Posterior cingulate gyrus (tissue), 11 donors: ENCODE measurements at regions of chr10 and their contacts with region 1.

Region 1: GRCh38 chr10:73848821-73849489 is 25.4 kb downstream of the CAMK2G start:
- DNase-seq: peak; percentile 68 to 97 (median 87)

Region 2: GRCh38 chr10:73879296-73880173 is 30.6 kb after region 1 on chr10:
- intact Hi-C with region 1: loop called (anchors 1 kb)
- DNase-seq: peak; percentile 55 to 97 (median 73)

Region 3: GRCh38 chr10:73931767-73932619 is 83.0 kb after region 1 on chr10:
- intact Hi-C with region 1: no loop called
- DNase-seq: no peak

Region 4: DNA sequence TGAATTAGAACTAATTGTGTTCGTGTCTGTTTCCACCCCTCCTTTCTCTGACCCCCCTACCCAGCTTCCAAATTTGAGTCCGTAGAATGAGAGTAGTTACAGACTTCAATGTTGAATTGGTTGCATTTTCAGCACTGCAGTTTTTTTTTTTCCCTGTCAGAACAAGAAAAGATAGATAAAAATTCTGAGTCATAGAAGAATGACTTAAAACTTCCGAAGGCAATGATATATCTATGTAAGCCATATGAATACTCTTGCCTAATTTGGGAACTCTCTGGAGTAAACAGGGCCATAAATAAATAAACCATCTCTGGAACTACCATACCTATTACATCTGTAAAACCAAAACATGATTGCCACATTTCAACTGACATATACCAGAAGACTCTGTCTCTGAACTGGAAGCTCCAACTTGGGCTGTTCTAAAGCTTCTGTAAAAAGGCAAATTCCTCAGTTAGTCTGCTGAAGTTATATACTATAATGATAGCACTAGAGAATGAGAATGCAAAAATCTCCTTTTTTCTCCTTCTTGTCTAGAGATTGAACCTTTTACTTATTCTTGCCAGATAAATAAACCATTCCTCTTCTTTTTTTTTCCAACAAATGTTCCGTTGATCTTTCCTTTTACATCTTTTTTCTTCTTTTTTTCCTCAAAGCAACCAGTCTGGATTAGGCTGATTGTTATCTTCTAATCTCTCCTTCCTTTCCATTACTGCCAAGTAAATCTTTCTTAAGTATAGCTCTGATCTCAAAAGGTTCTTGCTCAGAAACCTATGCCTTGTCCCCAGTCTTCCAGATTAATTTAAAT is 172.5 kb after region 1 on chr10:
- intact Hi-C with region 1: no loop called
- DNase-seq: no peak